Uterus (tissue), 4 donors: ENCODE measurements at regions of chr7 and their contacts with region 1.

Region 1: GRCh38 chr7:8841171-8841570 is 407.8 kb downstream of the NXPH1 start:
- DNase-seq: no peak
- H3K4me3 ChIP-seq: no peak overlapping the region
- H3K27ac ChIP-seq: no peak overlapping the region
- H3K4me1 ChIP-seq: no peaks in the 10 kb centered on the region
- H3K27me3 ChIP-seq: no peaks in the 10 kb centered on the region
- CTCF ChIP-seq: no peak
- POLR2A ChIP-seq: no peak

Region 2: DNA sequence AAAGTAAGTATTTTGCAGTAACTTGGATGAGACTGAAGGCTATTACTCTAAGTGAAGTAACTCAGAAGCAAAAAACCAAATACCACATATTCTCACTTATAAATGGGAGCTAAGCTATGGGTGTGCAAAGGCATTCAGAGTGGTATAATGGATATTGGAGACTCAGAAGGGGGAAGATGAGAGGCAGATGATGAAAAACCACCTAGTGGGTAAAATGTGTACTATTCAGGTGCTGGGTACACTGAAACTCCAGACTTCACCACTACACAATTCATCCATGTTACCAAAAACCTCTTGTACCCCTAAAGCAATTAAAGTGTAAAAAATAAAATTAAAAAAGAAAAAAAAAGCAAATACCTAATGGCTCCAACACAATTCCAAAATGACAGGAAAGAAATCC is 56.1 kb before region 1 on chr7:
- intact Hi-C with region 1: loop called (anchors 10 kb)
- DNase-seq: no peak
- H3K4me3 ChIP-seq: no peak overlapping the region
- H3K27ac ChIP-seq: no peak overlapping the region
- H3K4me1 ChIP-seq: no peaks in the 10 kb centered on the region
- H3K27me3 ChIP-seq: no peaks in the 10 kb centered on the region
- CTCF ChIP-seq: no peak
- POLR2A ChIP-seq: no peak